Dorsolateral prefrontal cortex (tissue), 120 donors: ENCODE measurements at regions of chrX and their contacts with region 1.

Region 1: DNA sequence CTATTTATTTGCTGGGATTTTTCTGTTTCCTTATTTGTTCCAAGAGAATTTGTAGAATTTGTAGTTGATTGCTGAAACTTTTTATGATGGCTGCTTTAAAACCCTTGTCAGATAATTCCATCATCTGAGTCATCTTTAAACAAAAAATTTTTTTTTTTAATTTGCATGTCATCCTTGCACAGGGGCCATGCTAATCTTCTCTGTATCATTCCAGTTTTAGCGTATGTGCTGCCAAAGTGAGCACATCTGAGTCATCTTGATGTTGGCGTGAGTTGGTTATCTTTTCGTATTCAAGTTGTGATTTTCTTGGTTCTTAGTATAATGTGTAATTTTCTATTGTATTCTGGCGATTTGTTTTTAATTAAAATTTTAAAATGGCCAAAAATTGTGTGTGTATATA is 18.7 kb upstream of the ZNF157 start:
- DNase-seq: no peak
- H3K4me3 ChIP-seq: no peak overlapping the region
- H3K27ac ChIP-seq: no peak overlapping the region
- H3K27me3 ChIP-seq: peaks cover 0 to 30% (median 3%) of the 10 kb centered on the region in 45 donors
- CTCF ChIP-seq: no peak

Region 2: DNA sequence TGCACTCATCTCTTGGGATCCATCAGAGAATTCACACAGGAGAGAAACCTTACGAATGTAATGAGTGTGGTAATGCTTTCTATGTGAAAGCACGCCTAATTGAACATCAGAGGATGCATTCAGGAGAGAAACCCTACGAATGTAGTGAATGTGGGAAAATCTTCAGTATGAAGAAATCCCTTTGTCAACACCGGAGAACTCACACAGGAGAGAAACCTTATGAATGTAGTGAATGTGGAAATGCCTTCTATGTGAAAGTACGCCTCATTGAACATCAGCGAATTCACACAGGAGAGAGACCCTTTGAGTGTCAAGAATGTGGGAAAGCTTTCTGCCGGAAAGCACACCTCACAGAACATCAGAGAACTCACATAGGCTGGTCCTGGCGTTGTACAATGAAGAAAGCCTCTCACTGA is 61.5 kb after region 1 on chrX:
- intact Hi-C with region 1: loop called in 1 of 2 experiments (anchors 10 kb)
- DNase-seq: no peak
- H3K4me3 ChIP-seq: no peak overlapping the region
- H3K27ac ChIP-seq: no peak overlapping the region
- H3K27me3 ChIP-seq: peaks cover 0 to 17% (median 0%) of the 10 kb centered on the region in 45 donors
- CTCF ChIP-seq: no peak

Region 3: DNA sequence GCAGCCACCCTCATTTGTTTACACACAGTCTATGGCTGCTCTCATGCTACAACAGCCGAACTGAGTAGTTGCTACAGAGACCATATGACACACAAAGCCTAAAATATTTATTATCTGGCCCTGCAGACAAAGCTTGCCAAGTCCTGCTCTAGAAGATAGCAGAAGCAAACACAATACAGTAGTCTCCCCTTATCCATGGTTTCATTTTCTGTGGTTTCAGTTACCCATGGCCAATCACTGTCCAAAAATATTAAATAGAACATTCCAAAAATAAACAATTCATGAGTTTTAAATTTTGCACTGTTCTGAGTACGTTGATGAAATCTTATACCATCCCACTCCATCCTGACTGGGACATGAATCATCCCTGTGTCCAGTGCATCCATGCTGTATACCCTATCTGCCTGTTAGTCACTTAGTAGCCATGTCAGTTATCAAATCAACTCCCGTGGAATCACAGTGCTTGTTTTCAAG is 444.8 kb after region 1 on chrX:
- intact Hi-C with region 1: no loop called
- DNase-seq: no peak
- H3K4me3 ChIP-seq: no peak overlapping the region
- H3K27ac ChIP-seq: no peak overlapping the region
- H3K27me3 ChIP-seq: peaks cover 0 to 56% (median 13%) of the 10 kb centered on the region in 45 donors
- CTCF ChIP-seq: no peak